ENCODE measurements at regions of chr3 and their contacts with region 1.

Region 1: DNA sequence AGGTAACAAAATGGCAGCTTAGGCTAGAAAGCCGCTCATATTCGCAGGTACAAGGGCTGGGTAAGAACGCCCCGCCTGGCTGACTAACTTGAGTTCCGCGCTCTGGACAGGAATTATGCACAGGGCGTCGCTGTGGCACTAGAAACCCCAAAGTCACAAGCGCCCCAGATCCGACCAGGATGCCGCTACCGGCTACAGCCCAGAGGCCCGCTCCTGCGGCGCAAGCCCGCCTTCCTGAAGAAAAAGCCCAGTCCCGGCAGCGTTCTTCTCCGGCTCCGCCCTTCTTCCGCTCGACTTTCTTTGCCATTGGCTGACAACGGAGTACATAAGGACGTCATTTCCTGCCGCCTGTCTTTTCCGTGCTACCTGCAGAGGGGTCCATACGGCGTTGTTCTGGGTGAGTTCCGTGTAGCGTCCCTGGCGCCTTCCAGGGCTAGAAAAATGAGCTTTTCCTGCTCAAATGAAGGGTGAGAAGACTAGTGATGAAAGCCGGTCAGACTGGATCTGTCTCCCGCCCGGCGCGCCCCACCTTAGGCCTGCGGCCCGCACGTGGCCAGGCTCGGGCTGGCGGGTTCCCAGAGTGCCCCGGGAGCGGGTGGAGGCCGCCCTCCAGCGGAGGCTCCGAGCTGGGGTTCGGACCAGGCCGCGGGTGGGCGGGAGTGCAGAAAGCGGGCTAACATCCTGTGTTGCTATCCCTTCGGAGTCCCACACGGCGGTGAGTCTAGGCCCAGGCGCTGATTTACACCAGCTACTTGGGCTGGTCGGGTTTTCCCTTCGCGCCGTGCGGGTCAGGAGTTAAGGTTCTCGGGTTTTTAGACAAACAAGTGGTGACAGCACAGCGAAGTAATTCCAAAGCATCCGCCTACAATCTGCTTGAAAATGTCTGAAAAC is at the start of gene RPSA:
- DNase-seq: peak; percentile 98
- ATAC-seq: peak; percentile 97
- H3K4me3 Mint-ChIP-seq: peak within 1 kb of the TSS; percentile 85
- H3K27ac Mint-ChIP-seq: peak within 1 kb of the TSS; percentile 96
- H3K4me1 Mint-ChIP-seq: peaks cover 53% of the 10 kb centered on the region
- H3K27me3 Mint-ChIP-seq: no peaks in the 10 kb centered on the region
- total RNA-seq, gene RPSA: 1,654 to 1,730 TPM

Region 2: DNA sequence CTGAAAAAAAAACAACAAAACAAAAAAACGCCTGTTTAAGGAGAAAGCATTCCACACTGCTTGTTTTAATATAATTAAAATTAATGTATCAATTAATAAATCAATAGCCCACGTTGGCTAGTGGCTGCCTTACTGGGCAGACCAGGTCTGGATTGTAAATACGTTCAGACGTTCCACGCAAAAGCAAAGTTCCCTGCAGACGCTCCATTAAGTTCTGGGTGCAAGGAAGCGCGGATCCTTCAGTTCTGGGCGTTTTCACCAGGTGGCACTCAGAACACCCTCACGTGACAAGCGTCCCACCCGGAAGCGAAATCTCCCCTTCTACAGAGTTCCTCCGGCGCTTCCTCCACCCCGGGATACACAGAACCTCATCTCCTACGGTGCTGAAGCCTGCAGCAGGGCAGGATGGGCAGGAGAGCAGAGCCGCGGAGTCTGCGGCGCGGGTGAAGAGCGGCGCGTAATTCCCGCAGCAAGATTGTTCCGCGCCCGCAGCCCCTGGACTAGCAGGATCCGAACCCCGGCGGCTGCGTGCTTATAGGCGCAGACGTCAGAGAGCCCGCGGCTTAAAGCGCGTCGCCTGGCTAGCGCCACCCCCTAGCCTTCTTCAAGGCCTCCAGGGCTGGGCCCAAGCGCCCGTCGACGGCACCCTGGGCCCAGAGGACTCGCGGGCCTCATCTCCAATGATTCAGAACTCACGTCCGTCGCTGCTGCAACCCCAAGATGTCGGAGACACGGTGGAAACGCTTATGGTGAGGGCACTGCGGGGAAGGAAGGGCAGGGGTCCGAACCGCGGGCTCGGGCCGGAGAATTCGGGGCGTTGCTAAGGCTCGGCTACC is 23.4 kb before region 1 on chr3 and contains the start of gene SLC25A38:
- CTCF ChIA-PET with region 1: interaction called, 17 read pairs
- POLR2A ChIA-PET with region 1: interaction called, 52 read pairs
- DNase-seq: peak; percentile 89
- ATAC-seq: peak; percentile 84
- H3K4me3 Mint-ChIP-seq: peak within 1 kb of the TSS; percentile 99
- H3K27ac Mint-ChIP-seq: peak within 1 kb of the TSS; percentile 100
- H3K4me1 Mint-ChIP-seq: peaks cover 41% of the 10 kb centered on the region
- H3K27me3 Mint-ChIP-seq: no peaks in the 10 kb centered on the region
- total RNA-seq, gene SLC25A38: 40.2 to 42.4 TPM

Region 3: GRCh38 chr3:39388741-39389248 is 17.8 kb before region 1 on chr3:
- CTCF ChIA-PET with region 1: interaction called, 17 read pairs
- POLR2A ChIA-PET with region 1: interaction called, 52 read pairs
- DNase-seq: peak; percentile 37
- ATAC-seq: peak; percentile 28
- H3K4me3 Mint-ChIP-seq: peak overlapping the region; percentile 60
- H3K27ac Mint-ChIP-seq: peak overlapping the region; percentile 91
- H3K4me1 Mint-ChIP-seq: peaks cover 82% of the 10 kb centered on the region
- H3K27me3 Mint-ChIP-seq: no peaks in the 10 kb centered on the region

Region 4: DNA sequence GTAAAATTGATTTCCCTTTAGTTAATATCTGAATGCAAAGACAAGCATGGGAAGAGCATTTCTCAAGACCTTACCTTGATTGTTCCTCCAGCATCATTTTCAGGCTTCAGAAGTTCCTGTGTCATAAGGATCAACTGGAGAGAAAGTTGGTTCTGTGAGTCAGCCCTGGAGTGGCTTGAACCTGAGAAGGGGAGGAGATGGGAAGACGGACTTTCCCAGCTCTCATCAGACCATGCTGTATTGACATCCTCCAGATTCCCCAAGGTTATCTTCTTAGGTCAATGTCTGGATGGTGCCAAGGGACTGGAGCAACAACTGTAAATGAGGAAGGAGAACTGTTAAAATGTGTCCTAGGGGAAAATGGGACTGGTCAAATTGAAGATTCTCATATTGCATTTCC is 20.9 kb after region 1 on chr3:
- CTCF ChIA-PET with region 1: no interaction called
- POLR2A ChIA-PET with region 1: no interaction called
- DNase-seq: no peak
- ATAC-seq: no peak
- H3K4me3 Mint-ChIP-seq: no peak overlapping the region
- H3K27ac Mint-ChIP-seq: no peak overlapping the region
- H3K4me1 Mint-ChIP-seq: no peaks in the 10 kb centered on the region
- H3K27me3 Mint-ChIP-seq: no peaks in the 10 kb centered on the region

Measured in activated CD8-positive, alpha-beta T cell treated with anti-CD3 and anti-CD28 coated beads, Interleukin-2, amount 10 ng/mL, durations not matched to agents 7 days and 5 days (primary cell).